Activated CD4-positive, alpha-beta memory T cell treated with anti-CD3 and anti-CD28 coated beads for 36 hours (primary cell): ENCODE measurements at regions of chr7 and their contacts with region 1.

Region 1: DNA sequence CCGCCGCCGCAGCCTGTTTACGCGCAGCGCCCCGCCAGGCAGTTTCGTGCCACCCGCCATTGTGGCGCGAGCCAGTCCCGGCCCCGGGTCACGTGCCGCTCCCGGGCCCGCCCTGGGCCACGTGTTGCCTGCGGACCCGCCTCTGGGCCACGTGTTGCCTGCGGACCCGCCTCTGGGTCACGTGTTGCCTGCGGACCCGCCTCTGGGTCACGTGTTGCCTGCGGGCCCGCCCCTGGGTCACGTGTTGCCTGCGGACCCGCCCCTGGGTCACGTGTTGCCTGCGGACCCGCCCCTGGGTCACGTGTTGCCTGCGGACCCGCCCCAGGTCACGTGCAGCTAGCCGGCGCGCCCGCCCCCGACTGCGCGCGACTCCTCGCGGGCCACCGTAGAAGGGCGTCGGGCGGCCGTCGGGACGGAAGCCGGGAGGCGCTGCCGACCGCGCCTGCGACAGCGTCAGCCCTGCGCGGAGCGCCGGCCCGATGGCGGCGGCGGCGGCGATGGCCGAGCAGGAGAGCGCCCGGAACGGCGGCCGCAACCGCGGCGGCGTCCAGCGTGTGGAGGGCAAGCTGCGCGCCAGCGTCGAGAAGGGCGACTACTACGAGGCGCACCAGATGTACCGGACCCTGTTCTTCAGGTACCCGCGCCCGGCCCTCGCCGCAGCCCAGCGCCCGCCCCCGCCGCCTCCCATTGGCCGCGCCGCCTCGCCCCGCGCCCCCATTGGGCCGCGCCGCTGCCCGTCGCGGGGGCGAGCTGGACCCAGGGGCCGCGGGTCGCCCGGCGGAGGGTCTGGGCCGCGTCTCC is at the start of gene GET4:
- DNase-seq: peak; percentile 96
- H3K4me3 Mint-ChIP-seq: peak within 1 kb of the TSS; percentile 95
- H3K27ac Mint-ChIP-seq: peak within 1 kb of the TSS; percentile 84
- H3K4me1 Mint-ChIP-seq: peaks cover 30% of the 10 kb centered on the region
- H3K27me3 Mint-ChIP-seq: no peaks in the 10 kb centered on the region
- total RNA-seq, gene GET4: 22.3 to 27.1 TPM

Region 2: GRCh38 chr7:322111-322671 is 554.2 kb before region 1 on chr7:
- CTCF ChIA-PET with region 1: interaction called, 13 read pairs
- POLR2A ChIA-PET with region 1: no interaction called
- intact Hi-C with region 1: loop called (anchors 10 kb)
- DNase-seq: peak; percentile 86
- H3K4me3 Mint-ChIP-seq: no peak overlapping the region
- H3K27ac Mint-ChIP-seq: no peak overlapping the region
- H3K4me1 Mint-ChIP-seq: no peaks in the 10 kb centered on the region
- H3K27me3 Mint-ChIP-seq: peaks cover 34% of the 10 kb centered on the region

Region 3: DNA sequence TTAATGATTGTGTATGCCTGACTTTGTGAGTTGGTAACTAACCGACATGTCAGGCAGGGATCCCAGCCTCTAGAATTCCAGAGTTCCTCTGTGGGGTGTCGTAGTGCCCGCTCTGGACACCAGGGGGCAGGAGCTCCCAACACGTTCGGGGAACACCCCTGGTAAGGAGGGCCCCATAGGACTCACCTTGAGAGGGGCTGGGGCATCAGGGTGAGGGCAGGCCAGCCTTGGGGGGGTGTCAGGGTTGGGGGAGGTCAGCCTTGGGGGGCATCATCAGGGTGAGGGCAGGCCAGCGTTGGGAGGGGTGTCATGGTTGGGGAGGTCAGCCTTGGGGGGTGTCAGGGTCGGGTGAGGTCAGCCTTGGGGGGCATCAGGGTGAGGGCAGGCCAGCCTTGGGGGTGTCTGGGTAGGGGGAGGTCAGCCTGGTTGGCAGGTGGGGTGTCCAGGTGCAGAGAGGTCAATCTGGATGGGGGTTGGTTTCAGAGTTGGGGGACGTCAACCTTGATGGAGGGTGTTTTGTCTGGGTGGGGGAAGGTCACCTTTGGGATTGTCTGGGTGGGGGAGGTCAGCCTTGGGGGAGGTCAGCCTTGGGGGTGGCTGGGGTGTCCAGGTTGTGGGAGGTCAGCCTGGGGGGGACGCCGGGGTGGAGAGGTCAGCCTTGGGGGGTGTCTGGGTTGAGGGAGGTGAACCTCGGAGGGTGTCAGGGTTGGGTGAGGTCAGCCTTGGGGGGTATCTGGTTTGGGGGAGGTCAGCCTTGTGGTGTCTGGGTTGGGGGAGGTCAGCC is 89.7 kb before region 1 on chr7:
- CTCF ChIA-PET with region 1: interaction called, 100 read pairs
- POLR2A ChIA-PET with region 1: no interaction called
- intact Hi-C with region 1: loop called (anchors 1 kb)
- DNase-seq: peak; percentile 80
- H3K4me3 Mint-ChIP-seq: no peak overlapping the region
- H3K27ac Mint-ChIP-seq: no peak overlapping the region
- H3K4me1 Mint-ChIP-seq: no peaks in the 10 kb centered on the region
- H3K27me3 Mint-ChIP-seq: no peaks in the 10 kb centered on the region

Region 4: DNA sequence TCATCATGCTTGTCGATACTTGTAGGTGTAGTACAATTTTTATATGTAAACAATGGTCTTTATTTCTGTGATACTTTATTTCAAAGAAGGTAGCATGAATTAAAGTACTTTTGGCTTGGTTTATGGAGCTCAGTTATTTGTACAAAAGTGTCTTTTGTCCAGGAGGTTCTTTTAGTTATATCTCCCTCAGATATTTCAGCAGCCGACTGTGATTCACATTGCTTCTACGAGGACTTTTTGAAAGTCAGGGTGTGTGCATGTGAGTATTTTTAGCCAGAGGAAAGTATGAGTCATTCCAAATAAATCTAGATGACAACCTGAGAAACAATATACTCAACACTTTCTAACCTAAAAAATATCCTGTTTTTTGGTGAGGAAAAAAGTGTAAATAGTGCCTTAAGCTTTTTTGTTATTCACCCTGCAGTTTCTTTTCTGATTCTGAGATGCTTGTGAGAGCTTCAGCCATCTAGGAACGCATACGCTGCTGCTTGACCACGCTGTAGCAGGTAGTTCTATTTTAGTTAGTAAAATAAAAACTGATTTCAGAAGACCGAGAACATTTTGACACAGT is 44.7 kb before region 1 on chr7:
- CTCF ChIA-PET with region 1: interaction called, 23 read pairs
- POLR2A ChIA-PET with region 1: interaction called, 9 read pairs
- intact Hi-C with region 1: loop called (anchors 1 kb)
- DNase-seq: peak; percentile 36
- H3K4me3 Mint-ChIP-seq: peak overlapping the region; percentile 74
- H3K27ac Mint-ChIP-seq: peak overlapping the region; percentile 97
- H3K4me1 Mint-ChIP-seq: peaks cover 48% of the 10 kb centered on the region
- H3K27me3 Mint-ChIP-seq: no peaks in the 10 kb centered on the region

Region 5: DNA sequence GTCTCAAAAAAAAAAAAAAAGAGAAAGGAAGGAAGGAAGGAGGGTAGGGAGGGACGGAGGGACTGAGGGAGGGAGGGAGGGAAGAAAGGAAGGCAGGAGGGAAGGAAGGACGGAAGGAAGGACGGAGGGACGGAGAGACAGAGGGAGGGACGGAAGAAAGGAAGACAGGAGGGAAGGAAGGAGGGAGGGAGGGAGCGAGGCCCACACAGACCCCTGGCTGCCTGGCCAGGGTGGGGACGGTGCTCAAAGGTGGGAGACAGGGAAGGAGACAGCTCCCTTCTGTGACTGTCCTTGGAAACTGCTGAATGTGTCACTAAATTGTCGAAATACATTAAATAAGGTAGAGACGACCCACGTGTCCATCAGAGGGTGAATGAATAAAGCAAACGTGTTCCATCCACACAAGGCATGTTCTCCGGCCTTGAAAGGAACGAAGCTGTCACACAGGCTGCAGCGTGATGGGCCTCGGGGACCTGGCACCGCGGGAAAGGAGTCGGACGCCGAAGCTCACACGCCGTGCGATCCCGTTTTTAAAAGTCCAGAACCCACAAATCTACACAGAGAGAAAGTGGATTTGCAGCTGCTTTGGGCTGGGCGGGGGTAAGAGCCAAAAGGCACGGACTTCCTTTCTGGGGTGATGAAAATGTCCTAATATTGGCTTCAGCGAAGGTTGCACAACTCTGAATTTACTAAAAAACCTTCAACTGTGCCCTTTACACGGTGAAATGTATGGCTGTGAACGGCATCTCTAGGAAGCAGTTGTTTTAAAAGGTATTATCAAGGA is 54.8 kb after region 1 on chr7:
- CTCF ChIA-PET with region 1: no interaction called
- POLR2A ChIA-PET with region 1: no interaction called
- intact Hi-C with region 1: loop called (anchors 2 kb)
- DNase-seq: no peak
- H3K4me3 Mint-ChIP-seq: no peak overlapping the region
- H3K27ac Mint-ChIP-seq: no peak overlapping the region
- H3K4me1 Mint-ChIP-seq: peaks cover 20% of the 10 kb centered on the region
- H3K27me3 Mint-ChIP-seq: no peaks in the 10 kb centered on the region

Region 6: GRCh38 chr7:1603346-1604211 is 727.2 kb after region 1 on chr7:
- CTCF ChIA-PET with region 1: no interaction called
- POLR2A ChIA-PET with region 1: no interaction called
- intact Hi-C with region 1: no loop called
- DNase-seq: no peak
- H3K4me3 Mint-ChIP-seq: no peak overlapping the region
- H3K27ac Mint-ChIP-seq: no peak overlapping the region
- H3K4me1 Mint-ChIP-seq: no peaks in the 10 kb centered on the region
- H3K27me3 Mint-ChIP-seq: peaks cover 11% of the 10 kb centered on the region